Thyroid gland (tissue), 4 donors: ENCODE measurements at regions of chr11 and their contacts with region 1.

Region 1: GRCh38 chr11:82906244-82906654 is 4.7 kb downstream of the DDIAS start:
- DNase-seq: no peak
- H3K4me3 ChIP-seq: no peak overlapping the region
- H3K27ac ChIP-seq: no peak overlapping the region
- H3K4me1 ChIP-seq: no peaks in the 10 kb centered on the region
- H3K27me3 ChIP-seq: no peaks in the 10 kb centered on the region
- CTCF ChIP-seq: peak; percentile 18 to 66 (median 57)
- POLR2A ChIP-seq: no peak

Region 2: DNA sequence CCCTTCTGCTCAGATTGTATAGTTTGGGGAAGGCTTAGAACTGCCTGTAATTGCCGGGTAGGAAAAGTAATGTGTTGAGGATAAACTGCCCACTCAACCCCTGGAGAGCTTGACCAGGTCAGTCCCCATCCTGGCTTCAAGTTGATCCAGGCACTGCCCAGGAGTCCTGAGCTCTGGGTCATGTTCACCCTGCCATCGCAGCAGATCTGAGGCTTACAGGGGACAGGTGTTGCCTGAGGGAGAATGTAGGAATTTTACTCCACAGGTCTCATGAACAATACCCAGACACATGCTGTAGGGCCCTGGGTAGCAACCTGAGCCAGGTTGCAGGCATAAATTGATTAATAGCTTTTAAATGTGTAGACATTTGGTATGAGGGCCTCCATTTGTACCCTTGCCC is 266.2 kb before region 1 on chr11:
- intact Hi-C with region 1: no loop called
- DNase-seq: no peak
- H3K4me3 ChIP-seq: no peak overlapping the region
- H3K27ac ChIP-seq: no peak overlapping the region
- H3K4me1 ChIP-seq: no peaks in the 10 kb centered on the region
- H3K27me3 ChIP-seq: no peaks in the 10 kb centered on the region
- CTCF ChIP-seq: no peak
- POLR2A ChIP-seq: no peak

Region 3: GRCh38 chr11:83249972-83250593 is 343.8 kb after region 1 on chr11:
- intact Hi-C with region 1: loop called (anchors 5 kb)
- DNase-seq: no peak
- H3K4me3 ChIP-seq: no peak overlapping the region
- H3K27ac ChIP-seq: no peak overlapping the region
- H3K4me1 ChIP-seq: no peaks in the 10 kb centered on the region
- H3K27me3 ChIP-seq: no peaks in the 10 kb centered on the region
- CTCF ChIP-seq: peak in 4 of 6 experiments; percentile 36 to 78 (median 58)
- POLR2A ChIP-seq: no peak